ENCODE measurements at regions of chr5 and their contacts with region 1.

Region 1: DNA sequence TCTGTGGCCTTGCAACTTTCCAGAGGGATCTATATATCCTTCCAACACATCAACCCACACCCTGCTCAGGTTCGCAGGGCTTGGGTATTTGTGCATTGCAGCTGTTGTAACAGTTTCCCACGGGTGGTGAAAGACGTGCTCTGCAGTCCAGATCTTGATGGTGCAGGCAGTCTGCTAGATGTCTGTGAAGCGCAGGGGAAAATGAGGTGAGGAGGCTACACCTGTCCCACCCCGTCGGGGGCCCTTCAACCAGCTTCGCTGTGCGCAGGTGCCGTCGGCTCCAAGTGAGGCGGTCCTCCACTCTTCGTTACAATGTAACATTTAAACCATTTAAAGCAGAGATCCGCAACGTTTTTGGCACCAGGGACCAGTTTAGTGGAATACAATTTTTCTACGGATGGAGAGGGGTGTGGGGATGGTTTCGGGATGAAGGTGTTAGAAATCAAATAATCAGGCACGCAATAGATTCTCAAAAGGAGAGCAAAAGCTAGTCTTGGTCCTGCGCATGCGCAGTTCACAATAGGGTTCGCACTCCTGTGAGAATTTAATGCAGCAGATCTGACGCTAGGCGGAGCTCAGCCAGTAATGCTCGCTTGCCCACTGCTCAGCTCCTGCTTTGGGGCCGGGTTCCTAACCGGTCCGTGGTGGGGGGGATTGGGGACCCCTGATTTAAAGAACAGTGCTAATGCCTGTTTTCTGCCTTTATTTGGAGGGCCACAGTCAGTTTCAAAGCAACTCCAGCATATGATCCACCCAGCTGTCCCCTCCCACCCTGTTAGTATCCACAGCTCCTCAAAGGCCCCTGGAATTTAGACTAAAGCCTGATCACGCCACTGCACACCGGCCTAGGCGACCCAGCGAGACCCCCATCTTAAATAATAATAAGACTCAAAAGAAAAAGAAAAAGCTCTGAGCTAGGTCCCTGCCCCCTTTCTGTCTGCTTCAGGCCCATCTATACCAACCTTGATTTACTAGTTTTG is 97.1 kb upstream of the SELENOP start:
- DNase-seq: peak; percentile 89 to 90 (median 89)
- H3K4me3 ChIP-seq: peak overlapping the region; percentile 40 to 56
- H3K4me3 Mint-ChIP-seq: peak overlapping the region; percentile 88 to 97 (median 93)
- H3K27ac ChIP-seq: peak overlapping the region; percentile 44
- H3K27ac Mint-ChIP-seq: peak overlapping the region; percentile 66 to 97 (median 95)
- H3K4me1 ChIP-seq: peaks cover 7% of the 10 kb centered on the region
- H3K4me1 Mint-ChIP-seq: peaks cover 8 to 18% (median 12%) of the 10 kb centered on the region in 4 donors
- H3K27me3 ChIP-seq: no peaks in the 10 kb centered on the region
- H3K27me3 Mint-ChIP-seq: peaks cover 10% of the 10 kb centered on the region in 2 donors

Region 2: DNA sequence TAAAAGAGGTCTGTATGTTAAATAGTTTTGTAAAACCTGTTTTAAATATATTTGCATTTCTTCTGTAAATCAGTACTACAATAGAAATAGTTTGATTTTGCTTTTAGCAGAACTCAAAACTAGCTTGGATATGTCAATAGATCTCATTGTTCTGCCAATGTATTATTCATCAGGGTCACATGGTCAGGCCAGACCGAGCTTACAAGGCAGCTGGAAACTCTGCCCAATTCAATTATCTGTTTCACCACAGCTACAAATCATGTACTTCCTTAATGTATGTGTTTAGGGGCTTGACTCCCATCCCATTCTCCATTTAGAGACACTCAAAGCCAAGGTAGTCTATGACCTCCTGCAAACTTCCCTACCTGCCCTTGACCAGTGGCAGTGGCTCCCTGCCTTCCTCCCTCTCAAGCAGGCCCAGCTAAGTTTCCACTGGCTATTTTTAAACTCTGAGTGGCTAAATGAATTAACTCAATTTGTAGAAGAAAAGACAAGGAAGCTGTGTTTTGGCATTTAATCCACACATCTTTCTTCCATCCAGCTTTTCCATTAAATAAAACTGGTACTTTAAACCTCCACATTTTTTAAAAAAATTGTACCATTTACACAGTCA is 50.7 kb before region 1 on chr5:
- CTCF ChIA-PET with region 1: no interaction called
- POLR2A ChIA-PET with region 1: no interaction called
- intact Hi-C with region 1: no loop called
- DNase-seq: no peak
- H3K4me3 ChIP-seq: no peak overlapping the region
- H3K4me3 Mint-ChIP-seq: no peak overlapping the region
- H3K27ac ChIP-seq: no peak overlapping the region
- H3K27ac Mint-ChIP-seq: no peak overlapping the region
- H3K4me1 ChIP-seq: no peaks in the 10 kb centered on the region
- H3K4me1 Mint-ChIP-seq: no peaks in the 10 kb centered on the region
- H3K27me3 ChIP-seq: no peaks in the 10 kb centered on the region
- H3K27me3 Mint-ChIP-seq: peaks cover 6 to 12% of the 10 kb centered on the region in 2 donors

Region 3: DNA sequence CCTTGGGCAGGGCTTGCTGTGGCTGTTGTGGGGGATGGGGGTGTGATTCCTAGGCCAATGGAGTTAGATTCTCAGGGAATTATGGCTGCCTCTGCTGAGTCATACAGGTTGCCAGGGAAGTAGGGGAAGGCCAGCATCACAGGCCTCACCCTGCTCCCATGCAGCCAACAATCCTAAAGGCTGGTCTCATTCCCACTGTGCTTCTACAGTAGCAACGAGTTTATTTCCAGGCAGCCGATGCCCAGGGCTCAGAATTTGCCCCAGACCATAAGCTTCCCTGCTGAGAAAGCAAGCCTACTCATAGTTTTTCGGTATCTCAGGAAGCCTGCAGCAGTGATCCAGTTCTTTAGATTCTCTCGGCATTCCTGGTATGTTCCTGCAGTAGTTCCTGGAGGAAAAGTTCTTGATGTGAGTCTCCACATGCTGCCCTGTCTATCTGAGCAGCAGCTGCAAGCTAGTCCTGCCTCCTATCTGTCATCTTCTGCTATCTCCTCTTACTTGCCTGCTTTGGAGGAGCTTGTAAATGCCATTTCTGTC is 37.8 kb before region 1 on chr5:
- CTCF ChIA-PET with region 1: no interaction called
- POLR2A ChIA-PET with region 1: no interaction called
- intact Hi-C with region 1: no loop called
- DNase-seq: no peak
- H3K4me3 ChIP-seq: no peak overlapping the region
- H3K4me3 Mint-ChIP-seq: no peak overlapping the region
- H3K27ac ChIP-seq: no peak overlapping the region
- H3K27ac Mint-ChIP-seq: no peak overlapping the region
- H3K4me1 ChIP-seq: peaks cover 7% of the 10 kb centered on the region
- H3K4me1 Mint-ChIP-seq: peaks cover 0 to 7% (median 3%) of the 10 kb centered on the region in 4 donors
- H3K27me3 ChIP-seq: no peaks in the 10 kb centered on the region
- H3K27me3 Mint-ChIP-seq: peaks cover 14 to 22% of the 10 kb centered on the region in 2 donors

Region 4: DNA sequence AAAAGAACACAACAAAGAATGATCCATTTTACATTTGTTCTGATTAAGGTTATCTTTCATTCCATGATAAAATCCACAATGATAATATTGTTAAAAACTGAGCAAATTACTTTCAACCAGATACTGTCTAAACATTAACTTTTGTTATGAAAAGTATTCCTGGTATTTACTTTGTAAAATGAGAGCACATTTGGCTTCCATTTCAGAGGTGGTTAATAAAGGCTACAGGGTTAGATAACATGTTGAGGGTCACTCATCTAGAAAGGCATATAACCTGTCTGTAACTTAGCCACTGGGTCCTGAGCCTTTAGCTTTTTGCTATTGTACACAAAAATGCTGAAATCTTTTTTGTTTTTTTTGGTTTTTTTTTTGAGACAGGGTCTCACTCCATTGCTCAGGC is 32.1 kb after region 1 on chr5:
- CTCF ChIA-PET with region 1: interaction called, 19 read pairs
- POLR2A ChIA-PET with region 1: no interaction called
- intact Hi-C with region 1: no loop called
- DNase-seq: no peak
- H3K4me3 ChIP-seq: no peak overlapping the region
- H3K4me3 Mint-ChIP-seq: no peak overlapping the region
- H3K27ac ChIP-seq: no peak overlapping the region
- H3K27ac Mint-ChIP-seq: no peak overlapping the region
- H3K4me1 ChIP-seq: no peaks in the 10 kb centered on the region
- H3K4me1 Mint-ChIP-seq: peaks cover 0 to 4% (median 3%) of the 10 kb centered on the region in 4 donors
- H3K27me3 ChIP-seq: no peaks in the 10 kb centered on the region
- H3K27me3 Mint-ChIP-seq: no peaks in the 10 kb centered on the region

Region 5: DNA sequence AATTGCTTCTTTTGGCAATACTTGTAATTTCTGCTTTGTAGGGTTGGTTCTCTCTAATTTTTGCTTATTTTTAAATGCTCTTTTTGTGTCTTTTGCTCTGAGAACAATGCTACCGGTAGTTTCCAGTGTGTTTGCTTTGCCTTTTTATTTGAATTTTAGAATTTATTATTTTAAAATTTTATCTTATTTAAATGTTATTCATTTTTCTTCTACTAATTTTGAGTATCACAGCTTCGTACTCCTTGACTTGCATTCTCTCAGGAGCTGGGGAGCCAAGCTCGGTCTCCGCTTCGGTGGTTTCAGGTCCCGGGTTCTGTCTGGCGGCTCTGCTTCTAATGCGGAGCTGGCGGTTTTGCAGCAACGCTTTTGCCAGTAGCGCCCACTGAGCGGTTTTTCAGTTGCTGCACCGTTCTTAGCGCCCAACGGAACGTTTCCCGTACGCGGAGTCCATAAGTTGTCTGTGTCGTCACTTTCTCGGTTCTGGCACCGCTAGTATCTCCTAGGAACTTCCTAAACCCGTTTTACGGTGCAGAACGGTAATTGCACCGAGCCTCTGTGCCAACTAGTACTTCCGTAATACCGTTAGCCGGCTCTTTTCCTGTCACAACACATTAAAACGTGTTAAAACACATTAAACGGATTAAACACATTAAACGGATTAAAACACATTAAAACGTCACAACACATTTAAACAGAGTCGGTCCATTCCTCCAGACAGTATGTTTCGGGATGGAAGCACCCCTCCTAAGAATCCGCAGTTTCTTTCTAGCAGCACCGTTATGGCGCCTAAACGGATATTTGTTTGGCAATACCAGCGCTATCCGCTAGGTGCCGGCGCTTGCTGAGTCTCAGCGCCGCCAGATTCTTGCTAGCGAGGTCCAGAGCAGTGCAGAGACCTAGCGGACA is 85.7 kb after region 1 on chr5:
- CTCF ChIA-PET with region 1: interaction called, 134 read pairs
- POLR2A ChIA-PET with region 1: interaction called, 129 read pairs
- intact Hi-C with region 1: loop called (anchors 1 kb)
- DNase-seq: peak; percentile 86 to 89 (median 88)
- H3K4me3 ChIP-seq: peak overlapping the region; percentile 72 to 76
- H3K4me3 Mint-ChIP-seq: peak overlapping the region; percentile 93 to 100 (median 100)
- H3K27ac ChIP-seq: peak overlapping the region; percentile 93
- H3K27ac Mint-ChIP-seq: peak overlapping the region; percentile 98 to 100 (median 100)
- H3K4me1 ChIP-seq: peaks cover 34% of the 10 kb centered on the region
- H3K4me1 Mint-ChIP-seq: peaks cover 14 to 69% (median 26%) of the 10 kb centered on the region in 4 donors
- H3K27me3 ChIP-seq: no peaks in the 10 kb centered on the region
- H3K27me3 Mint-ChIP-seq: no peaks in the 10 kb centered on the region

Region 6: GRCh38 chr5:43040287-43041098 is 131.7 kb after region 1 on chr5 and contains the start of gene ANXA2R:
- CTCF ChIA-PET with region 1: interaction called, 48 read pairs
- POLR2A ChIA-PET with region 1: interaction called, 177 read pairs
- intact Hi-C with region 1: loop called (anchors 1 kb)
- DNase-seq: peak; percentile 94 to 97 (median 97)
- H3K4me3 ChIP-seq: peak within 1 kb of the TSS; percentile 78 to 99
- H3K4me3 Mint-ChIP-seq: peak within 1 kb of the TSS; percentile 97 to 100 (median 98)
- H3K27ac ChIP-seq: peak within 1 kb of the TSS; percentile 98
- H3K27ac Mint-ChIP-seq: peak within 1 kb of the TSS; percentile 99 to 100 (median 99)
- H3K4me1 ChIP-seq: peaks cover 50% of the 10 kb centered on the region
- H3K4me1 Mint-ChIP-seq: peaks cover 19 to 82% (median 39%) of the 10 kb centered on the region in 4 donors
- H3K27me3 ChIP-seq: no peaks in the 10 kb centered on the region
- H3K27me3 Mint-ChIP-seq: no peaks in the 10 kb centered on the region
- total RNA-seq, gene ANXA2R: 43.4 to 47.8 TPM

Region 7: DNA sequence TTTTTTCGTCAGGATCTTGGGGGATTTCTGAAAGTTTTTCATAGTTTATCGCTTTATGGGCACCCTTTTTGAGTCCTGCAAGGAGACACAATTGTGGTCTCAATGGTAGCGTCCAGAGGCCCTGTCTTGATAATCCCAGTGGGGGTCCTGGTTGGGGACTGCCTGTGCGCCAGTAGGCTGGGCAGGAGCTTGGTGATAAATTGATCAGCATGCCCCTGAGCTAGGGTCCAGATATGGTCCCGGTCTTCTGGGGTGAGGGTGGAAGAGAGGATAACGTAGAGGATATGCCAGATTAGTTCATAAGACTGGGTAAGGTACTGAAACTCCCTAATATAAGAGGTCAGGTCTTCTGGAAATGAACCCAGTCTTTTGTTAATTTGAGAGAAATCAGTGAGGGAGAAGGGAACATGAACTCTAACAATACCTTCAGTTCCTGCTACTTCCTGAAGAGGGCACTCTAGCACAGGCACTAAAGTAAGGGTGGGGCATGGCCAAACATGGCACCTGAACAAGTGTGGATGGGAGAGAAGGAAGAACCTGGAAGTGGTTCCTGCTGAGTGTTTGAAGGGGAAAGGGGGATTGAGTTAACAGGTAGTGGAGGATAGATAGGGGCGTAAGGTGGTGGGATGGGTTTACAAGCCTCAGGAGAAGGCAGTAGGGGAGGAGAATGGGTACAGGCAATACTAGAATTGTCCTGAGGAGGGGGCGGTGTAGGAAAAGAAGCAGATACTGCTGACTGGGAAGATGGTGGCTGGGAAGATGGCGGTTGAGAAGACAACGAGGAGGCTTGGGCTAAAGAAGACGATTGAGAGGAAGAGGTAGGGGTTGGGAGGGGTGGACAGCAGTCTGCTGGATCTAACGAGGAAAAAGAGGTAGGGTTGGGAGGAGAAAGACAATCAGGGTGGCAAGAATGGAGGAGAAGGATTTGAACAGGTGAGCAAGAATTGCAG is 165.1 kb after region 1 on chr5:
- CTCF ChIA-PET with region 1: interaction called, 13 read pairs
- POLR2A ChIA-PET with region 1: interaction called, 96 read pairs
- intact Hi-C with region 1: loop called (anchors 2 kb)
- DNase-seq: peak; percentile 64 to 73 (median 67)
- H3K4me3 ChIP-seq: no peak overlapping the region
- H3K4me3 Mint-ChIP-seq: peak overlapping the region in 1 of 8 donors; percentile 17
- H3K27ac ChIP-seq: no peak overlapping the region
- H3K27ac Mint-ChIP-seq: peak overlapping the region; percentile 5 to 71 (median 59)
- H3K4me1 ChIP-seq: peaks cover 46% of the 10 kb centered on the region
- H3K4me1 Mint-ChIP-seq: peaks cover 29 to 72% (median 42%) of the 10 kb centered on the region in 4 donors
- H3K27me3 ChIP-seq: no peaks in the 10 kb centered on the region
- H3K27me3 Mint-ChIP-seq: no peaks in the 10 kb centered on the region

Region 8: GRCh38 chr5:43120720-43121564 is 212.1 kb after region 1 on chr5 and contains the start of gene ZNF131:
- CTCF ChIA-PET with region 1: interaction called, 13 read pairs
- POLR2A ChIA-PET with region 1: interaction called, 22 read pairs
- intact Hi-C with region 1: loop called (anchors 5 kb)
- DNase-seq: peak; percentile 95 to 100 (median 98)
- H3K4me3 ChIP-seq: peak within 1 kb of the TSS; percentile 85 to 87
- H3K4me3 Mint-ChIP-seq: peak within 1 kb of the TSS; percentile 91 to 96 (median 94)
- H3K27ac ChIP-seq: peak within 1 kb of the TSS; percentile 97
- H3K27ac Mint-ChIP-seq: peak within 1 kb of the TSS; percentile 87 to 99 (median 98)
- H3K4me1 ChIP-seq: peaks cover 45% of the 10 kb centered on the region
- H3K4me1 Mint-ChIP-seq: peaks cover 21 to 46% (median 37%) of the 10 kb centered on the region in 4 donors
- H3K27me3 ChIP-seq: no peaks in the 10 kb centered on the region
- H3K27me3 Mint-ChIP-seq: no peaks in the 10 kb centered on the region
- total RNA-seq, gene ZNF131: 76.5 to 86.9 TPM

Region 9: DNA sequence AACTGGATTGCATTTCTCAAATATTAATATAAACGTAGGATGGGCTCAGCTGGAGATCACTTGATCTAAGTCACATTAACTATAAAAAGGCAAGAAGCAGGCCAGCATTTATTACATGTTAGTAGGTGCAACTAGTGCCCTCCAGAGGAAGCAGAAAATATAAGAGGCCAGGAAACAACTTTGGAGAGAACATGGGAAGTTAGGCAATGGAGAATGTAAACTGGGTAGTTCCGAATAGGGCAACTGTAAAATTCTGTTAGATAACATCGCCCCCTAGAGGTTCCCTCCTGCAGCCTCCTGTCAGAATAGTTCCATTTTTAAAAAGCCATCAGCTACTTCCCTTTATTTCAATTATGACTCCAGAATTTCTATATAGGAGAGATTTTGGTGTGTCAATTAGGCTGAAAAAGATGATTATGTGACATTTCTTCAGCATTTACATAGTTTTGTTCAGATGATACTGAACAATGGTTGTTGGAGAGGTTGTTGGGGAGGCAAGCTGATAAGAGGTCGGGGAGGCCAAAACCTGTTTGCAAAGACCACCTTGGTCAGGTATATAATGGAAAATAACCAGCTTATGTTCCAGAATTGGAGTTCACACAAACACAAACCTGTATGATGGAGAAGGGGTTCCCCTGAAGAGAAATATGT is 481.0 kb after region 1 on chr5:
- CTCF ChIA-PET with region 1: interaction called, 17 read pairs
- POLR2A ChIA-PET with region 1: no interaction called
- intact Hi-C with region 1: loop called (anchors 1 kb)
- DNase-seq: peak; percentile 45 to 56 (median 53)
- H3K4me3 ChIP-seq: no peak overlapping the region
- H3K4me3 Mint-ChIP-seq: no peak overlapping the region
- H3K27ac ChIP-seq: no peak overlapping the region
- H3K27ac Mint-ChIP-seq: peak overlapping the region in 3 of 7 donors; percentile 0 to 47 (median 31)
- H3K4me1 ChIP-seq: peaks cover 11% of the 10 kb centered on the region
- H3K4me1 Mint-ChIP-seq: peaks cover 6 to 30% (median 21%) of the 10 kb centered on the region in 4 donors
- H3K27me3 ChIP-seq: no peaks in the 10 kb centered on the region
- H3K27me3 Mint-ChIP-seq: no peaks in the 10 kb centered on the region